ENCODE measurements at regions of chr2 and their contacts with region 1.

Region 1: GRCh38 chr2:28958689-28959088 is 22.4 kb upstream of the TOGARAM2 start:
- DNase-seq: peak; percentile 69 to 77
- H3K4me3 ChIP-seq: no peak overlapping the region
- H3K4me3 Mint-ChIP-seq: no peak overlapping the region
- H3K27ac Mint-ChIP-seq: no peak overlapping the region
- H3K4me1 ChIP-seq: no peaks in the 10 kb centered on the region
- H3K4me1 Mint-ChIP-seq: no peaks in the 10 kb centered on the region
- H3K27me3 ChIP-seq: no peaks in the 10 kb centered on the region
- H3K27me3 Mint-ChIP-seq: no peaks in the 10 kb centered on the region
- CTCF ChIP-seq: peak; percentile 50 to 68

Region 2: DNA sequence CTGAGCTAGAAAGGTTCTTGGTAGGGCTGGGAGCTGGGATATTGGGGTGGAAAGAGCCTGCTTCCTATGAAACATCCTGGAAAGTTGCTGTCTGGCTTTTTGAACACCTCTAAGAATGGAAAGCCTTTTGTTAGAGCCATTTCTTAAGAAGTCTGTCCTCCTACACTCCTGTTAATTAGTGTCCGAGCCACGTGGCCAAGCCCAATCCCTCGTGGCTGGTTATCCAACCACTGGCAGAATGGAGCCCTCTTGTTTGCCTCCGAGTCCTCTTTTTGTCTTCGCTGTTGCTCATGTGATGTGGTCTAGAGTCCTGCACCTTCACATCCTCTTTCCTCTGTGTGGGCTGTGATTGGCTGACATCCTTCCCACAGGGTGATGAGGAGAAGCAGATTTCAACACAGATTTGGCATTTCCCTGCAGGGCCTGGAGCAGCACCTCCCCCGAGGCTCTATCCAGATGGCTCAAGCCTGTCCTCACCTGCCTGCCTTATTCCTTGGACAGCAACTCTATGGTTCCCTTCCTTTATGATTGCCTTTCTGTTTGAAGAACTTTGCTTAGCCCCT is 14.2 kb after region 1 on chr2:
- CTCF ChIA-PET with region 1: no interaction called
- POLR2A ChIA-PET with region 1: no interaction called
- intact Hi-C with region 1: no loop called
- DNase-seq: no peak
- H3K4me3 ChIP-seq: no peak overlapping the region
- H3K4me3 Mint-ChIP-seq: no peak overlapping the region
- H3K27ac Mint-ChIP-seq: no peak overlapping the region
- H3K4me1 ChIP-seq: peaks cover 10% of the 10 kb centered on the region; the same call in 1 of the 2 replicates
- H3K4me1 Mint-ChIP-seq: peaks cover 15% of the 10 kb centered on the region
- H3K27me3 ChIP-seq: no peaks in the 10 kb centered on the region
- H3K27me3 Mint-ChIP-seq: no peaks in the 10 kb centered on the region
- CTCF ChIP-seq: no peak

Region 3: DNA sequence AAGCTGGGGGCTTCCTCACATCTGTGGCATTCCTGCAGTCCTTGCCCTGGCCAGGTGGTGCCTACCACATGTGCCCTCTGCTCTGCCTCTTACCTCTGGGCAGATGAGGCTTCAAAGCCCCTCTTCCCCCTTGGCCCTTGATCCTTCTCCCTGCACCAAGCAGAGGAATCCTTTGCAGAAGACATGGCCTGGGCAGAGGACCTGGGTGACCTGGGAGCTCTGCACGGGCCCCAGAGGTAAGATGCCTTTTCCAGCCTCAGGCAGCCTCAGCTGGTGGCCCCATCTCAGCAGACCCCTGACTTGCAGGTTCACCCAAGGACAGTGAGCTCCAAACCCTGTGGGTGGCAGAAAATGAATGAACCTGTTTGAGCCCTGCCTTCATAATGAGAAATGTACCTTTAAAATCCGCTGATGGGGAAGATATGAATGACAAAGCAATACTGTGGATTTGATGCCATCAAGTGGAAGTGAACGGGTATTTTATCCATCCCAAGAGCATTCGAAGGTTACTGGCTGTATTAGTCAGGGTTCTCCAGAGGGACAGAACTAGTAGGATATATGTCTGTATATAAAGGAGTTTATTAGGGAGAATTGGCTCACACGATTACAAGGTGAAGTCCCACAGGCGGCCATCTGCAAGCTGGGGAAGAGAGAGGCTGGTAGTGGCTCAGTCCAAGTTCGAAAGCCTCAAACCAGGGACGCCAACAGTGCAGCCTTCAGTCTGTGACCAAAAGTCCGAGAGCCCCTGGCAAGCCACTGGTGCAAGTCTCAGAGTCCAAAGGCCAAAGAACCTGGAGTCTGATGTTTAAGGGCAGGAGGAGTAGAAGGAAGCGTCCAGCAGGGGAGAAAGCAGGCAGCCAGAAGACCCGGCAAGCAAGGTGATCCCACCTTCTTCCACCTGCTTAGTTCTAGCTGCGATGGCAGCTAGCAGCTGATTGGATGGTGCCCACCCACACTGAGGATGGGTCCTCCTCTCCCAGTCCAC is 54.4 kb after region 1 on chr2:
- CTCF ChIA-PET with region 1: interaction called, 4 read pairs
- POLR2A ChIA-PET with region 1: no interaction called
- intact Hi-C with region 1: loop called (anchors 1 kb)
- DNase-seq: no peak
- H3K4me3 ChIP-seq: no peak overlapping the region
- H3K4me3 Mint-ChIP-seq: no peak overlapping the region
- H3K27ac Mint-ChIP-seq: no peak overlapping the region
- H3K4me1 ChIP-seq: no peaks in the 10 kb centered on the region
- H3K4me1 Mint-ChIP-seq: no peaks in the 10 kb centered on the region
- H3K27me3 ChIP-seq: no peaks in the 10 kb centered on the region
- H3K27me3 Mint-ChIP-seq: no peaks in the 10 kb centered on the region
- CTCF ChIP-seq: no peak

Region 4: DNA sequence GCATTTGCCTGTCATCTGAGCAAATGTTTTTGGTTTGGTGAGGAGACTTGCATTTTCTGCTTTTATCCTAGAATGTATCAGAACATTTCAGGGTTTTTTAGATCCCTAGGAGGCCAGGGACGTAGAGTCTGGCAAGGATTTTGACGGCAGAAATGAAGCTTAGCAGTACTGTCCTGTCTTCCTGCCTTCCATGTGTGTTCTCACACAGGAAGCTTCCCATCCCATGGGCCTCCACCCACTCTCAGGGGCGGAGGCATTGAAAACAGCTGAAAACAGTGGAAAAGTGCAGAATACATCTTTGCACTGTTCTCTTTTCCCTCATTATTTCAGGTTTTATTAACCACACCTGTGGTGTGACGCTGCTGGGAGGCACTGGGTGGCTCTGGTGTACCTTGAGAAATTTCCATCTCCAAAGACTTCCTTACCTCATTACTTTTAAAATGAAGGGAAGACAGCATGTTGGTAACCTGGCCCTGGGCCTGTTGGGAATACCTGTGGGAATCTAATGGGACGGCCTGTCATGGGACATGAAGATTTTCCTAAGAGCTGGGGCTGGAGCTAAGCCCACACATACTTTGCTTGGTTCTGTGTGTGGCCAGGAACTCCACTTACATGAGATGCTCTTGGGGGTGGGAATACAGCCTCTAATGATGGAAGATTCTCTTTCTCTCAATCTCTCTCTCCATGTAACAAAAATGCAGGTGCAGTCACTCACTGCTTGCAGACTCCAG is 95.1 kb after region 1 on chr2:
- CTCF ChIA-PET with region 1: no interaction called
- POLR2A ChIA-PET with region 1: no interaction called
- intact Hi-C with region 1: loop called (anchors 1 kb)
- DNase-seq: peak in 1 of 2 experiments; percentile 18
- H3K4me3 ChIP-seq: no peak overlapping the region
- H3K4me3 Mint-ChIP-seq: no peak overlapping the region
- H3K27ac Mint-ChIP-seq: no peak overlapping the region
- H3K4me1 ChIP-seq: peaks cover 11% of the 10 kb centered on the region
- H3K4me1 Mint-ChIP-seq: peaks cover 33% of the 10 kb centered on the region
- H3K27me3 ChIP-seq: no peaks in the 10 kb centered on the region
- H3K27me3 Mint-ChIP-seq: no peaks in the 10 kb centered on the region
- CTCF ChIP-seq: peak in 1 of 2 experiments; percentile 41

Region 5: GRCh38 chr2:29196792-29197788 is 238.4 kb after region 1 on chr2:
- CTCF ChIA-PET with region 1: interaction called, 6 read pairs
- POLR2A ChIA-PET with region 1: no interaction called
- intact Hi-C with region 1: loop called (anchors 1 kb)
- DNase-seq: peak; percentile 80 to 89
- H3K4me3 ChIP-seq: no peak overlapping the region
- H3K4me3 Mint-ChIP-seq: no peak overlapping the region
- H3K27ac Mint-ChIP-seq: no peak overlapping the region
- H3K4me1 ChIP-seq: no peaks in the 10 kb centered on the region
- H3K4me1 Mint-ChIP-seq: peaks cover 4% of the 10 kb centered on the region
- H3K27me3 ChIP-seq: no peaks in the 10 kb centered on the region
- H3K27me3 Mint-ChIP-seq: peaks cover 4% of the 10 kb centered on the region
- CTCF ChIP-seq: peak; percentile 88 to 92

Region 6: DNA sequence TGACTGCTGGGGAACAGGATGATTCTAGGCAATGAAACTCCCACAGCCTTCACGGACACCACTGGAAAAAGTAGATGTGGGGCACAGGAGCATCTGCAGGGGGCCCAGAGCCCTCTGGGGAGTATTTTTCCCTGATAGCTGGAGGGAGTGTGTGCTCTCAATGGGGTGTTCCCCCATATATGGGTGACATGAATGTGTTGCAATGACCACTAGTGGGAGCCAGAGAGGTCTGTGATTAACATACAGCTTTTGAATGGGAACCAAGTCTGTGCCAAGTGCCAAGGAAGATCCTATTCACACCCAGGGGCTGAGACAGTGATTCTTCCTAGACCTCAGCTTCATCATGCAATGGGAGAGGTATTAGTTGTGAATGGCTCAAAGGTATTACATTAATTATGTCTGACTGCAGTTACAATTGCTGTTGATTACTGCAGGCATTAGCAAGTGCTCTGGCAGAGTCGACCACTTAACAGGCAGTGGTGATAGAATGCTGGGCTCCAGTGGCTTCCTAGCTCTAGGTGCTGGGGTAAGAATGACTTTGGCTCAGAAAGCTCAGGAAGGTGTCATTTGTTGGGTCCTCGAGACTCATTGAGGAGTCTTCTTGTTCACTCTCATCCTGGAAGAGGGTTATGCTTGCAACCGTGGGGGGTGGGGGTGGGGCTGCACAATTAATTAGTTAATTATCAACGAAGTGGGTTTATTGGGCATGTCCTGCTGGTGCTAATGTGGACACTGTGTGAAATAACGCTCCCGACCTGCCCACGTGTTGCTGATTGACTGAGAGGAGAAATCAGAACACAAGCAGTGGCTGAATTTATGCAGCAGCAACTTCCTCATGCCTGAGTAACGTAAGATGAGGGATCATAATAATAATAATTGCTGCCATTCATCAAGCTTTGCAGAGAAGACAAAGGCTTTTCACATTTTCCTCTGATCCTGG is 350.7 kb after region 1 on chr2:
- CTCF ChIA-PET with region 1: no interaction called
- POLR2A ChIA-PET with region 1: no interaction called
- intact Hi-C with region 1: loop called (anchors 1 kb)
- DNase-seq: peak; percentile 55 to 62
- H3K4me3 ChIP-seq: no peak overlapping the region
- H3K4me3 Mint-ChIP-seq: no peak overlapping the region
- H3K27ac Mint-ChIP-seq: no peak overlapping the region
- H3K4me1 ChIP-seq: no peaks in the 10 kb centered on the region
- H3K4me1 Mint-ChIP-seq: no peaks in the 10 kb centered on the region
- H3K27me3 ChIP-seq: no peaks in the 10 kb centered on the region; the same call in 1 of the 2 replicates
- H3K27me3 Mint-ChIP-seq: peaks cover 20% of the 10 kb centered on the region
- CTCF ChIP-seq: peak; percentile 76 to 83

Region 7: GRCh38 chr2:29841386-29842004 is 882.8 kb after region 1 on chr2:
- CTCF ChIA-PET with region 1: no interaction called
- POLR2A ChIA-PET with region 1: no interaction called
- intact Hi-C with region 1: loop called (anchors 2 kb)
- DNase-seq: peak in 1 of 2 experiments; percentile 48
- H3K4me3 ChIP-seq: no peak overlapping the region
- H3K4me3 Mint-ChIP-seq: no peak overlapping the region
- H3K27ac Mint-ChIP-seq: no peak overlapping the region
- H3K4me1 ChIP-seq: no peaks in the 10 kb centered on the region
- H3K4me1 Mint-ChIP-seq: no peaks in the 10 kb centered on the region
- H3K27me3 ChIP-seq: no peaks in the 10 kb centered on the region
- H3K27me3 Mint-ChIP-seq: peaks cover 21% of the 10 kb centered on the region
- CTCF ChIP-seq: peak; percentile 91 to 92

Measured in Caco-2 (cell line).